ENCODE measurements at regions of chr17 and their contacts with region 1.

Region 1: GRCh38 chr17:72120642-72121163 is at the start of gene SOX9:
- DNase-seq: peak; percentile 87 to 94 (median 91)
- ATAC-seq: peak; percentile 91 to 94 (median 93)
- H3K4me3 ChIP-seq: peak within 1 kb of the TSS; percentile 54 to 94 (median 74)
- H3K27ac ChIP-seq: peak within 1 kb of the TSS; percentile 76 to 98 (median 87)
- H3K4me1 ChIP-seq: peaks cover 0 to 65% (median 15%) of the 10 kb centered on the region in 12 donors
- H3K27me3 ChIP-seq: peaks cover 3 to 89% (median 40%) of the 10 kb centered on the region in 9 donors
- CTCF ChIP-seq: no peak
- POLR2A ChIP-seq: peak; percentile 96 to 97
- total RNA-seq, gene SOX9: 8.9 to 19.7 (median 13.7) TPM

Region 2: GRCh38 chr17:70767102-70767701 is 1353.5 kb before region 1 on chr17:
- intact Hi-C with region 1: loop called in 1 of 10 experiments (anchors 10 kb)
- DNase-seq: no peak
- ATAC-seq: no peak
- H3K4me3 ChIP-seq: no peak overlapping the region
- H3K27ac ChIP-seq: no peak overlapping the region
- H3K4me1 ChIP-seq: no peaks in the 10 kb centered on the region
- H3K27me3 ChIP-seq: no peaks in the 10 kb centered on the region
- CTCF ChIP-seq: peak in 10 of 12 donors; percentile 41 to 64 (median 49)
- POLR2A ChIP-seq: no peak

Region 3: GRCh38 chr17:71764505-71764904 is 356.2 kb before region 1 on chr17:
- intact Hi-C with region 1: loop called in 1 of 10 experiments (anchors 10 kb)
- DNase-seq: peak in 2 of 5 donors; percentile 32 to 37
- ATAC-seq: peak in 3 of 4 donors; percentile 41 to 81 (median 72)
- H3K4me3 ChIP-seq: no peak overlapping the region
- H3K27ac ChIP-seq: no peak overlapping the region
- H3K4me1 ChIP-seq: no peaks in the 10 kb centered on the region
- H3K27me3 ChIP-seq: no peaks in the 10 kb centered on the region
- CTCF ChIP-seq: peak in 6 of 12 donors; percentile 7 to 41 (median 32)
- POLR2A ChIP-seq: no peak

Region 4: DNA sequence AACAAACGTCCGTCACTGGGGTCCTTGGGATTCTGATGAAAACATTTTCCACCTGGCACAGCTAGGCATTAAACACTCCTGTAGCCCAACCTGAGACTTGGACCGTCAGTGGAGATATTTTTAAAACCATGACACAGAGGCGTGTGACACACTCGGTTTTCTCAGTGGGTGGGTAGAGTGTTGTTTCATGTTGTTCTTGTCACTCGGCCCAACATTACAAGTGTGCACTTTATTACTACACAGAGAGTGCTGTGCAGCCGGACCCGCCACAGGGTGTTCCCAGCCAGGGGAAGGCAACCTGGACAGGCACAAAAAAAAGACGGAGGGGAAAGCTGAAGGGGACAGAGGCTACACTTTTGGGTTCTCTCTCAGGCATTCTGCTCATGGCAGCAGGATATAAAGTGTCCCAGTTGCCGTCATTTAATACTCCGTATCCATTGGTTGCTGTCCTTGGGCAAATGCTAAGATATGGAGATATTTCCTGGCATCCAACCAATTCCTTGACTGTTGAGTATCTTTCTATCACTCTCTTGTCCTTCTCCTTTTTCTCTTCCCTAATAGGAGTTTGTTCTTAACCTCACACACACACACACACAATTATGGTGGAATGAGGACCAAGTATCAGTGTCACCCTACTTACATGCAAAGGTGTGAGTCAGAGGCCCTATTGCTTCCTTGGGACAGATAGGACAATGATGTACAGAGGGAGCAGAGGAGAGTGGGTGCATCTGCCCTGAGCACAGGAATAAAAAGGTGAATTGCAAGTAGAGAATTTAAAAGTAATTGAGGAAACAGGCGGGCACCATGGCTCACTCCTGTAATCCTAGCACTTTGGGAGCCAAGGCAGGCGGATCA is 154.0 kb before region 1 on chr17:
- intact Hi-C with region 1: loop called in 7 of 10 experiments (anchors 5 to 10 kb)
- DNase-seq: peak in 4 of 5 donors; percentile 28 to 60 (median 36)
- ATAC-seq: peak; percentile 94 to 95 (median 94)
- H3K4me3 ChIP-seq: no peak overlapping the region
- H3K27ac ChIP-seq: peak overlapping the region in 11 of 12 donors; percentile 21 to 82 (median 62)
- H3K4me1 ChIP-seq: peaks cover 0 to 20% (median 0%) of the 10 kb centered on the region in 12 donors
- H3K27me3 ChIP-seq: no peaks in the 10 kb centered on the region
- CTCF ChIP-seq: no peak
- POLR2A ChIP-seq: no peak

Region 5: DNA sequence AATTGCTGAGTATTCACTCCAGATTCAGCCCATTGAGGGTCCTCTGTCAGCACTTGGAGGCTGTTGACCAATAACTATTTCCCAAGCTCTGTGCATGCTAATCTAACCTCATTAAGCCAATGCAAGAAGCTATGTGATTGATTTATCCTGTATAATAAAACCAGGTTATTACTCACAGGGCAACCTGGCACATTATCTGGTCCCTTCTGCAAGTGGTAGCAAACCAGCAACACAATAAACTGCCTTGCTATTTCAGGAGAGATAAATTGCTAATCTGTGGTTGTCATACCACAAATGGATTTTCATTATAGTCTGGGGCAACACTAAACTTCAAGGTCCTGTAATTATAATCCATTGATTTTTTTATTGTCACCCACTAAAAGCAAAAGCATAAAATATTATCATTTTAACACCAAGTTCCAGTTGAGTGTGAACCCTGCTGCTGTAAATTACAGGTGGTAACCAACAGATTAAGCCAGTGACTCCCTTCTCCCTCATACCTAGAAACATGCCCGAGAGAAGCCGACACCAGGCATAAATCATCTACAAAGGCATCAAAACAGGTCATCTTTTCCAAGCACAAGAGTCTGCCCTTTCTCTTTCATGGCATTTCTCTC is 51.0 kb before region 1 on chr17:
- intact Hi-C with region 1: no loop called
- DNase-seq: no peak
- ATAC-seq: no peak
- H3K4me3 ChIP-seq: no peak overlapping the region
- H3K27ac ChIP-seq: no peak overlapping the region
- H3K4me1 ChIP-seq: no peaks in the 10 kb centered on the region
- H3K27me3 ChIP-seq: no peaks in the 10 kb centered on the region
- CTCF ChIP-seq: no peak
- POLR2A ChIP-seq: no peak

Region 6: DNA sequence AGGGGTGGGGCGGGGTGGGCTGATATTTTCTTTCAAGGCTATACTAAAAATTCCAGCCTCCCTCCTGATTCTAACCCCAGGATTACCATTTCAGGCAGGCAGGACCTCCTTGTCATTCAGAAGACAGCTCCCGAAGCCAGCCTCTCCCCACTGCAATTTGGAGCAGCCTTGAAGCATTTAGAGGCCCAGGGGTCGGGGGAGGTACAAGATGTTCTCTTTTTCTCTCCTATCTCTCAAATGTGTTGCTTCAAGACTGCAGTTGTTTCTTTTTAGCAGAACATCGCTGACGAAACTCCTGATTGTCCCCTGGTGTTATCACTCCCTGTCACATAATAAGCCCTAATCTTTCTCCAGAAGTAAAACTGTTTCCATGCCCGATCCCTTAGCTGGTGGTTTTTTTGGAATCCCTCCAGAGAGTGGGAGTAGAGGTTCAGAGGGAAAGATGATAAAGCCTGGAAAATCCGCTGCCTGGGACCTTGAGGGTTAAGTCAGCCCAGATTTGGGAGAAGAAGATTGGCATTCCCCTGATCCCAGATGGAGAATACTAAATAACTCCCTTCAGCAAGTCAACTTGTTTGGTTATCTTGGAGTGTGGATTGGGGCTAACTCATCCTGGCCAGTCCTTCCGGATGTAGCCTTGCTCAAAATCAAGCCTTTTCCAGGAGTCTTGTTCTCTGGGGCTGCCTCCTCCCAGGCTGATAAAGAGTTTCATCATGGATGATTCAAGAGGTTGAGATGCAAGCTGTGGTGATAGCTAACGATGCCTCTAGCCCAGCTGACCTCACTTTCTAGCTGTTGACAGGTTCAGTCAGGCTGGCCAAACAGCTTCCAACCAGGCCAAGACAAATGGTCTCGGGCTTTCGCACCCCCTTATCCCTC is 71.5 kb after region 1 on chr17:
- intact Hi-C with region 1: loop called in 3 of 10 experiments (anchors 5 kb)
- DNase-seq: peak in 4 of 5 donors; percentile 45 to 81 (median 62)
- ATAC-seq: peak; percentile 79 to 88 (median 86)
- H3K4me3 ChIP-seq: peak overlapping the region in 1 of 12 donors; percentile 13
- H3K27ac ChIP-seq: peak overlapping the region in 9 of 12 donors; percentile 40 to 76 (median 56)
- H3K4me1 ChIP-seq: peaks cover 0 to 21% (median 0%) of the 10 kb centered on the region in 12 donors
- H3K27me3 ChIP-seq: no peaks in the 10 kb centered on the region
- CTCF ChIP-seq: no peak
- POLR2A ChIP-seq: no peak

Region 7: GRCh38 chr17:72362376-72363088 is 241.8 kb after region 1 on chr17:
- intact Hi-C with region 1: no loop called
- DNase-seq: no peak
- ATAC-seq: no peak
- H3K4me3 ChIP-seq: no peak overlapping the region
- H3K27ac ChIP-seq: no peak overlapping the region
- H3K4me1 ChIP-seq: no peaks in the 10 kb centered on the region
- H3K27me3 ChIP-seq: peaks cover 0 to 10% (median 0%) of the 10 kb centered on the region in 9 donors
- CTCF ChIP-seq: no peak
- POLR2A ChIP-seq: no peak

Region 8: GRCh38 chr17:72539981-72540897 is 419.5 kb after region 1 on chr17:
- intact Hi-C with region 1: loop called in 6 of 10 experiments (anchors 2 to 10 kb)
- DNase-seq: peak; percentile 61 to 90 (median 71)
- ATAC-seq: peak; percentile 87 to 99 (median 92)
- H3K4me3 ChIP-seq: peak overlapping the region in 7 of 12 donors; percentile 6 to 51 (median 33)
- H3K27ac ChIP-seq: peak overlapping the region in 2 of 12 donors; percentile 47 to 57
- H3K4me1 ChIP-seq: peaks cover 0 to 10% (median 3%) of the 10 kb centered on the region in 12 donors
- H3K27me3 ChIP-seq: peaks cover 0 to 8% (median 0%) of the 10 kb centered on the region in 9 donors
- CTCF ChIP-seq: peak; percentile 71 to 99 (median 86)
- POLR2A ChIP-seq: no peak